Activated CD8-positive, alpha-beta memory T cell treated with anti-CD3 and anti-CD28 coated beads, Interleukin-2, amount 10 ng/mL, durations not matched to agents 7 days and 5 days (primary cell): ENCODE measurements at regions of chr6 and their contacts with region 1.

Region 1: GRCh38 chr6:85642774-85643536 is at the start of gene SYNCRIP:
- DNase-seq: peak; percentile 99
- ATAC-seq: peak; percentile 80
- H3K4me3 Mint-ChIP-seq: peak within 1 kb of the TSS; percentile 92
- H3K27ac Mint-ChIP-seq: peak within 1 kb of the TSS; percentile 93
- H3K4me1 Mint-ChIP-seq: peaks cover 41% of the 10 kb centered on the region
- H3K27me3 Mint-ChIP-seq: no peaks in the 10 kb centered on the region
- total RNA-seq, gene SYNCRIP: 105 to 146 TPM

Region 2: GRCh38 chr6:85593438-85594196 is 49.3 kb before region 1 on chr6 and contains the start of gene SNX14:
- CTCF ChIA-PET with region 1: interaction called, 17 read pairs
- DNase-seq: peak; percentile 91
- ATAC-seq: peak; percentile 82
- H3K4me3 Mint-ChIP-seq: peak within 1 kb of the TSS; percentile 100
- H3K27ac Mint-ChIP-seq: peak within 1 kb of the TSS; percentile 99
- H3K4me1 Mint-ChIP-seq: peaks cover 23% of the 10 kb centered on the region
- H3K27me3 Mint-ChIP-seq: no peaks in the 10 kb centered on the region
- total RNA-seq, gene SNX14: 62.8 to 67.3 TPM

Region 3: DNA sequence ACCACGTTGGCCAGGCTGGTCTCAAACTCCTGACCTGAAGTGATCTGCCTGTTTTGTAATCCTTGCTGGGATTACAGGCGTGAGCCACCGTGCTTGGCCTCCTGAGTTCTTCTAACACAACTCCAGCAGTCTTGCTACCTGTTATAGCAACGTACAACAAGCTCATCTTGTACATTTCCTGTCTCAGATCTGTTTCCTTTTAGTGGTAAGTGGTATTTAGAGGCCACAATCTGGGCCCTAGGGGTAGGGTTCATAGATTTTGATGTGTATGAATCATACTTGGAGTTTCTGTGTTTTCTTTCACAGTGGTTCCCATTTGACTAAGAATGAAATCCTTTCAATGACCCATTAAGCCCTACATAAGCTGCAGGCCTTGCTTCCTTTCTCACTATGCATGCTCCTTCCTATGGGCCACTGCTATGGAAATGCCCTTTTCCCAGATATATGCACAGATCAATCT is 26.8 kb after region 1 on chr6:
- CTCF ChIA-PET with region 1: interaction called, 75 read pairs
- DNase-seq: peak; percentile 80
- ATAC-seq: peak; percentile 88
- H3K4me3 Mint-ChIP-seq: peak overlapping the region; percentile 69
- H3K27ac Mint-ChIP-seq: peak overlapping the region; percentile 94
- H3K4me1 Mint-ChIP-seq: peaks cover 59% of the 10 kb centered on the region
- H3K27me3 Mint-ChIP-seq: no peaks in the 10 kb centered on the region

Region 4: GRCh38 chr6:85678602-85679444 is 35.9 kb after region 1 on chr6:
- CTCF ChIA-PET with region 1: interaction called, 75 read pairs
- DNase-seq: peak; percentile 97
- ATAC-seq: peak; percentile 83
- H3K4me3 Mint-ChIP-seq: peak overlapping the region; percentile 100
- H3K27ac Mint-ChIP-seq: peak overlapping the region; percentile 96
- H3K4me1 Mint-ChIP-seq: peaks cover 49% of the 10 kb centered on the region
- H3K27me3 Mint-ChIP-seq: peaks cover 4% of the 10 kb centered on the region